HepG2 (cell line): ENCODE measurements at regions of chr20 and their contacts with region 1.

Region 1: DNA sequence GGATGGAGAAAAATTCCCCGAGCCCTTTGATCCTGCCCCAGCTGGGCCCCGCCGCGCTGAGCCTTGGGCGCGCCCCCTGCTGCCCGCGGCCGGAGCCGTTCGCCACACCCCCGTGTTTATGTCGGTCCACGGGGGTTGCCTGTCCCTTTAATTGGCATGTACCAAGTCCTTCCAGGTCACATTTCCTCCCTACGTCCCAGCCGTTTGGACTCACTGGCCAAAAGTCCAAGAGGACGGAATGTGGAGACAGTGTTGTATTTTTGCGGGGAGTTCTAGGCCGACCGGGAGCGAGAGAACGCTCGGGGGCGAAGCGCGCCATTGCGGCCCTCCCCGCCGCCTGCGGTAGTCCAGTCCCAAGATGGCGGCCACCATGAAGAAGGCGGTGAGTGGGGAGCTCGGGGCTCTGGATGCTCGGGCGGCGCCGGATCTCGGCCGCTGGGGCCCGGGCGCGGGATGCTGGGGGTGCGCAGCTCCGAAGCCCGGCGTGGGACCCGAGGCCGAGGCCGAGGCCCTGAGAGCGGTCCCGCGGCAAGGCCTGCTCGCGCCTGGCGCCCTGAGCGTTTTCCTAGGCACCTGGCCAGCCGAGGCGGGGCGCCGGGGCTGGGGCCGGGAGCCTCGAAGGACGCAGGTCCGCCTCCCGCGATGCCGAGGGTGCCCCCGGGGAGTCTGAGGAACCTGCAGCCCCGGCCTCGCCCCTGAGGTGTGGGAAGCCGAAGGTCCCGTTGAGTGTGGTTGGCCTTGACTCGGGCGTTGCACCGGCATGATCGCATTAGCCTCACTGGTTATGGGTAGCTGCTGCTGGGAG is at the start of gene PFDN4:
- DNase-seq: peak; percentile 88
- ATAC-seq: peak; percentile 95
- H3K4me3 ChIP-seq: peak within 1 kb of the TSS; percentile 77 to 100 (median 82)
- H3K27ac ChIP-seq: peak within 1 kb of the TSS; percentile 97
- H3K4me1 ChIP-seq: peaks cover 50% of the 10 kb centered on the region
- H3K27me3 ChIP-seq: peaks cover 0 to 6% of the 10 kb centered on the region in 2 experiments; a peak in 1 of 5 replicates
- CTCF ChIP-seq: peak; percentile 99
- EP300 ChIP-seq: peak; percentile 43 to 61; a peak in 3 of 4 replicates
- POLR2A ChIP-seq: peak; percentile 59 to 80; a peak in 3 of 4 replicates
- RAD21 ChIP-seq: peak; percentile 63
- total RNA-seq, gene PFDN4: 227 and 299 TPM in 2 replicates

Region 2: DNA sequence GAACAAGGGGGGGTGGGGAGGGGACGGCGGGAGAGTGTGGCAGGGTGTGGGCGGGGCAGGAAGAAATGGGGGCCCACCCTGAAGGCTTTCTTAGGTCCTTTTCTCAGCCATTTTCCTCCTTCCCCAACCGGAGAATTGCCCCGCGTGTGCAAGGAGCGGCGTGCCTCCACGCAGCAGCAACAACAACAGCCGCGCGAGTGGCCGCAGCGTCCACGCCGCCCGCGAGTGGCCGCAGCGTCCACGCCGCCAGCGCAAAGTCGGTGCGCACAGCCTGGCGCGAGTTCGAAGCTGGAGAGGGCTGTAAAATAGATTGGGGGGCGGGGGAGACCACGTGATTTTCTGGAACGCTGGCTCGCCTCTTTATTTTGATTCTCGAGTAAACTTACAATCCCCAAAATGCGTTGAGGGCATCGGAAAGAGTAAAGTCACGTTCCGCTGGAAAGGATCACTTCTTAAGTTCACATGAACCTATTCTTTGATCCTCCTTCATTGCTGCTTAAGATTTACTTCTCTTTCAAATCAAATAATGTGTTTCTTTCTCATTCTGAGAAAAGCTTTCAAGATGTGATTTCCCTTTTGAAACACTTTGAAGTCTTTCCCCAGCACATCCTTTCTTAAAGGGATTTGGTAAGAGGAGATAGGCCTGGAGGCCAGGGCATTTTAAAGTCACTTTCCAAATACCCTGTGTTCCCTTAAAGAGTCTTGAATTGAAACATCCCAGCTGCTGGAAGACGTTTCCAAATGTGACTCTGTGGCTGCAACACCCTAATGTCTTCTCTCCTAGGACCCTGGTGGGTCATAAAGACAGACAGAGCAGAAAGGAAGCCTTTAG is 547.7 kb before region 1 on chr20:
- CTCF ChIA-PET with region 1: no interaction called
- POLR2A ChIA-PET with region 1: no interaction called
- in situ Hi-C with region 1: no loop called
- intact Hi-C with region 1: no loop called
- DNase-seq: no peak
- ATAC-seq: no peak
- H3K4me3 ChIP-seq: peak overlapping the region in 2 of 3 experiments; percentile 6 to 7; a peak in 2 of 6 replicates
- H3K27ac ChIP-seq: peak overlapping the region; percentile 9
- H3K4me1 ChIP-seq: peaks cover 55% of the 10 kb centered on the region
- H3K27me3 ChIP-seq: no peaks in the 10 kb centered on the region
- CTCF ChIP-seq: no peak
- EP300 ChIP-seq: no peak
- POLR2A ChIP-seq: no peak
- RAD21 ChIP-seq: no peak

Region 3: GRCh38 chr20:54040531-54040930 is 167.4 kb before region 1 on chr20:
- CTCF ChIA-PET with region 1: no interaction called
- POLR2A ChIA-PET with region 1: no interaction called
- in situ Hi-C with region 1: no loop called
- intact Hi-C with region 1: no loop called
- DNase-seq: no peak
- ATAC-seq: no peak
- H3K4me3 ChIP-seq: no peak overlapping the region
- H3K27ac ChIP-seq: no peak overlapping the region
- H3K4me1 ChIP-seq: no peaks in the 10 kb centered on the region
- H3K27me3 ChIP-seq: no peaks in the 10 kb centered on the region
- CTCF ChIP-seq: no peak
- EP300 ChIP-seq: no peak
- POLR2A ChIP-seq: no peak
- RAD21 ChIP-seq: no peak

Region 4: GRCh38 chr20:54093423-54094267 is 114.3 kb before region 1 on chr20:
- CTCF ChIA-PET with region 1: interaction called, 7 read pairs
- POLR2A ChIA-PET with region 1: interaction called, 13 read pairs
- in situ Hi-C with region 1: no loop called
- intact Hi-C with region 1: no loop called
- DNase-seq: no peak
- ATAC-seq: no peak
- H3K4me3 ChIP-seq: no peak overlapping the region
- H3K27ac ChIP-seq: no peak overlapping the region
- H3K4me1 ChIP-seq: peaks cover 23% of the 10 kb centered on the region
- H3K27me3 ChIP-seq: peaks cover 0 to 6% of the 10 kb centered on the region in 2 experiments; a peak in 1 of 5 replicates
- CTCF ChIP-seq: no peak
- EP300 ChIP-seq: no peak
- POLR2A ChIP-seq: no peak
- RAD21 ChIP-seq: no peak

Region 5: DNA sequence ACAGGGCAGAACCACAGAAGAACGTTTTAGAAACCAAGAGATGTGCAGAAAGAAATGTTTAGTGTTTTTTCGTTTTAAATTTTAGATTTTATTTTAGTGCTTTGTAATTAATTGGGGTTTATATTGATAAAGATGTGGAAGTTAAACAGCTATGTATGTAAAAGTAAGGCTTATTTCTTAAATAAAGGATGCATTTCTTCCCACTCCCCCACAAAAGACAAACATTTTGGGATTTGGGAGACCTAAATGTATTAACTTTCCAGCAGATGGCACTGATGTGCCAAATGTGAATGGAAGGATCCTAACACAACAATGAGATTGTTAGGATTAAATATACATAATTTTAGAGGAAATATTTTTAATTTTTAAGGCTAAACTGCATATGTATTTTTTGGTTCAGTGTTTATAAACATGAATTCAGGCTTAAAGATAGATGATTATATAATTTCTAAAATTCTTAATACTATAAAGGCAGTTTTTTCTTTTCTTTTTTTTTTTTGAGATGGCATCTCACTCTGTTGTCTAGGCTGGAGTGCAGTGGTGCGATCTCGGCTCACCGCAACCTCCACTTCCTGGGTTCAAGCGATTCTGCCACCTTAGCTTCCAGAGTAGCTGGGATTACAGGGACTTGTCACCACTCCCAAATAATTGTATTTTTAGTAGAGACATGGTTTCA is 11.9 kb after region 1 on chr20:
- CTCF ChIA-PET with region 1: no interaction called
- POLR2A ChIA-PET with region 1: interaction called, 10 read pairs
- in situ Hi-C with region 1: no loop called
- intact Hi-C with region 1: no loop called
- DNase-seq: peak; percentile 61
- ATAC-seq: peak; percentile 31; the same call in 1 of the 3 replicates
- H3K4me3 ChIP-seq: no peak overlapping the region
- H3K27ac ChIP-seq: no peak overlapping the region
- H3K4me1 ChIP-seq: no peaks in the 10 kb centered on the region
- H3K27me3 ChIP-seq: no peaks in the 10 kb centered on the region
- CTCF ChIP-seq: peak; percentile 70
- EP300 ChIP-seq: no peak
- POLR2A ChIP-seq: no peak
- RAD21 ChIP-seq: peak; percentile 35; the same call in 1 of the 2 replicates